Transverse colon (tissue), 4 donors: ENCODE measurements at regions of chr2 and their contacts with region 1.

Region 1: DNA sequence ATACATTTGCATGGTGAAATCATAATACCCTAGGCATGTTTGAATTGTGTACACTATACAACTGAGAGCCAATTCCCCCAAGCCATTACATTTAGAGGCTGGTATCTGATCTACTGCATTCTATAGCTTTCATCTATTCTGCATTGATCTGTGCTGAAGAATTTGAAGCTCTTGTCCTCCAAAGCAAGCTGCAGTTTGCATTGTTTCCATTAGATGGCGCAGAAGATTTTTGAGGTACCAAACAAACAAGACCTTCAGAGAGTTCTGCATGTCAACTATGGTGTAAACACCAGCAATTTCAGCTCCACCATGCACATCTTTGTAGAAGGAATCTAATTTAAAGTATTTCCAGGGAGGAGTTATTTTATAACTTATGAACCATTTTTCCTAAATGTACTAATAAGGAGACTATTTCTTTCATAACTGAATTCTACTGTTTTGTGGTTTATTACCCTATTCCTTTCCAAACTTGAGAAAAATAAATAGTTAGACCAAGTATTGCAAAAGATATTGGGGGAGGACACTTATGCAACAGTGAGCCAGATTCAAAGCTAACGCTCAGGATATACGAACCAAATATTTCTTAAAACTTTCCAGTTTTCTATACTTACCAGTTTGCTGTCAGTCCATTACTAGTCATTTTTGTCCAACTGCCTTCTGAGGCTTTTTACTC is 761.8 kb upstream of the ACVR2A start:
- DNase-seq: peak; percentile 43
- H3K4me3 ChIP-seq: no peak overlapping the region
- H3K27ac ChIP-seq: no peak overlapping the region
- H3K4me1 ChIP-seq: no peaks in the 10 kb centered on the region
- H3K27me3 ChIP-seq: no peaks in the 10 kb centered on the region
- CTCF ChIP-seq: peak; percentile 79 to 90 (median 83)
- EP300 ChIP-seq: no peak
- POLR2A ChIP-seq: no peak

Region 2: GRCh38 chr2:147888680-147889079 is 805.7 kb after region 1 on chr2:
- in situ Hi-C with region 1: loop called in 1 of 4 experiments (anchors 10 kb)
- intact Hi-C with region 1: no loop called
- DNase-seq: no peak
- H3K4me3 ChIP-seq: no peak overlapping the region
- H3K27ac ChIP-seq: no peak overlapping the region
- H3K4me1 ChIP-seq: peaks cover 0 to 41% (median 5%) of the 10 kb centered on the region in 4 donors
- H3K27me3 ChIP-seq: no peaks in the 10 kb centered on the region
- CTCF ChIP-seq: no peak
- EP300 ChIP-seq: no peak
- POLR2A ChIP-seq: no peak